K562 (cell line): ENCODE measurements at regions of chr5 and their contacts with region 1.

Region 1: DNA sequence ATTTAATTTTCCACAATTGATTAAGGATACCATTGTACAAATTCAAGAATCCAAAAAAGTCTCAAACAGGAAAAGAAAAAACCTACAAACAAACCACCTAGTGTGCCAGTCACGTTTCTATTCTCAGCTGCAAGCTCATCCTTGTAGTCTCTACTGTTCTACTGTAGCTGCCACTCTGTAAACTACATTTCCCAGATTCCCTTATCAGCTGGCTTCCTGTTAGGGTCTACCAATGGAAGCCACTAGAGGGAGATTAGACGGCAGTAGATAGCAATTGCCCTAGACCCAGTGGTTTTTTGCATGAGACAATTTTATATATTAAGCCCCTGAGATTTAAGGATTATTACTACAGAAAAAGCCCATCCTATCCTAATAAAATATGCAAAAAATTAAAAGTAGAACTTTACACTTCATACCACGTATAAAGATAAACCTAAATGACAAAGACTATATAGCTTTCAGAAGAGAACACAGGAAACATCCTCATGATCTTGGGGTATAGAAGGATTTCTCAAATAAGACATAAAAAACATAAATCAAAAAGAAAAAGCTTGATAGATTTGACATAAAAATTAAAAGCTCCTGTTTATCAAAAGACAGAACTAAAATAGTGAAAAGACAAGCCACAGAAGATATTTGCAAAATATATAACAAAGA is 37.4 kb downstream of the P4HA2 start:
- DNase-seq: peak; percentile 65 to 85 (median 78)
- ATAC-seq: peak; percentile 100
- H3K4me3 ChIP-seq: no peak overlapping the region
- H3K27ac ChIP-seq: no peak overlapping the region
- H3K4me1 ChIP-seq: no peaks in the 10 kb centered on the region; a peak in 1 of 5 replicates
- H3K27me3 ChIP-seq: no peaks in the 10 kb centered on the region
- CTCF ChIP-seq: peak; percentile 79 to 89 (median 80)
- EP300 ChIP-seq: peak; percentile 35; the same call in 1 of the 2 replicates
- POLR2A ChIP-seq: no peak
- RAD21 ChIP-seq: peak; percentile 42 to 55

Region 2: DNA sequence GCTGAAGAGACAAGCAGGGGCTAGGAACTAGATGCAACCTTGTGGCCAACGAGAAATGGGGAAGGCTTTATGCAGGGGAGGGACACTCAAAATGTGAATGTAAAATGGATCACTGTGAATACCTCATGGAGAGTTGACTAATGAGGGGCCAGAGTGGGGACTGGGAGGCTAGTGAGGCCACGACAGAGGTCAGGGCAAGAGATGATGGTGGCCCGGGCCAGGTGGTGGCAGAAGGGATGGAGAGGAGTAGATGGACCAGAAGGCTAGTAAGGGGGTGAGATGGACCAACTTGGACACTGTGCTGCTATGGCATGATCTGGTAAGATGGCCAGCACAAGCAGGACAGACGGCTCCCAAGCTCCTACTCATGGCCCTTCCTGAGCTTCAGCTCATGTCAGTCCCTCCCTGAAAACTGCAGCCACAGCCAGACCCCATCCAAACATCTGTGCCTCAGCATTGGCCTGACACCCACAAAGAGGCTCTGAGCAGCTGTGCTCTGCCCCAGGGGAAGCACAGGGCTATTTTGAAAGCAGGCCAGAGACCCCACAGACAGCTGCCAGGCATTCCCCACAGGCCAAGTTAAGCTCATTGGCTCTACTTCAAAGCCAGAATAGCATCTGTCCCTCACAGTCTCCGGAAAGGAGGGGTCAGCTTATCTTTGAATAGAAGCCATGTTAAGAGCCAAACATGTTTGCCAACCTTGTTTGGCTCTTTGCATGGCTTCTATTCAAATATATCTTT is 15.3 kb after region 1 on chr5:
- CTCF ChIA-PET with region 1: no interaction called
- POLR2A ChIA-PET with region 1: interaction called, 14 read pairs
- in situ Hi-C with region 1: no loop called
- intact Hi-C with region 1: no loop called
- DNase-seq: no peak
- ATAC-seq: no peak
- H3K4me3 ChIP-seq: no peak overlapping the region
- H3K27ac ChIP-seq: no peak overlapping the region
- H3K4me1 ChIP-seq: no peaks in the 10 kb centered on the region
- H3K27me3 ChIP-seq: no peaks in the 10 kb centered on the region
- CTCF ChIP-seq: no peak
- EP300 ChIP-seq: no peak
- POLR2A ChIP-seq: no peak
- RAD21 ChIP-seq: no peak

Region 3: GRCh38 chr5:132363431-132364112 is 173.3 kb after region 1 on chr5:
- CTCF ChIA-PET with region 1: no interaction called
- POLR2A ChIA-PET with region 1: no interaction called
- in situ Hi-C with region 1: no loop called
- intact Hi-C with region 1: no loop called
- DNase-seq: peak in 3 of 4 experiments; percentile 48 to 78 (median 50)
- ATAC-seq: peak; percentile 75
- H3K4me3 ChIP-seq: no peak overlapping the region
- H3K27ac ChIP-seq: no peak overlapping the region
- H3K4me1 ChIP-seq: peaks cover 0 to 7% of the 10 kb centered on the region in 2 experiments; a peak in 4 of 5 replicates
- H3K27me3 ChIP-seq: no peaks in the 10 kb centered on the region
- CTCF ChIP-seq: no peak
- EP300 ChIP-seq: no peak
- POLR2A ChIP-seq: no peak
- RAD21 ChIP-seq: no peak